PC-3 (cell line): ENCODE measurements at regions of chr7 and their contacts with region 1.

Region 1: GRCh38 chr7:85160223-85160622 is 26.6 kb downstream of the SEMA3D start:
- DNase-seq: peak; percentile 82
- ATAC-seq: peak; percentile 87
- H3K4me3 ChIP-seq: peak overlapping the region; percentile 64
- H3K27ac ChIP-seq: peak overlapping the region; percentile 91
- H3K4me1 ChIP-seq: peaks cover 34% of the 10 kb centered on the region
- H3K27me3 ChIP-seq: no peaks in the 10 kb centered on the region
- CTCF ChIP-seq: no peak

Region 2: DNA sequence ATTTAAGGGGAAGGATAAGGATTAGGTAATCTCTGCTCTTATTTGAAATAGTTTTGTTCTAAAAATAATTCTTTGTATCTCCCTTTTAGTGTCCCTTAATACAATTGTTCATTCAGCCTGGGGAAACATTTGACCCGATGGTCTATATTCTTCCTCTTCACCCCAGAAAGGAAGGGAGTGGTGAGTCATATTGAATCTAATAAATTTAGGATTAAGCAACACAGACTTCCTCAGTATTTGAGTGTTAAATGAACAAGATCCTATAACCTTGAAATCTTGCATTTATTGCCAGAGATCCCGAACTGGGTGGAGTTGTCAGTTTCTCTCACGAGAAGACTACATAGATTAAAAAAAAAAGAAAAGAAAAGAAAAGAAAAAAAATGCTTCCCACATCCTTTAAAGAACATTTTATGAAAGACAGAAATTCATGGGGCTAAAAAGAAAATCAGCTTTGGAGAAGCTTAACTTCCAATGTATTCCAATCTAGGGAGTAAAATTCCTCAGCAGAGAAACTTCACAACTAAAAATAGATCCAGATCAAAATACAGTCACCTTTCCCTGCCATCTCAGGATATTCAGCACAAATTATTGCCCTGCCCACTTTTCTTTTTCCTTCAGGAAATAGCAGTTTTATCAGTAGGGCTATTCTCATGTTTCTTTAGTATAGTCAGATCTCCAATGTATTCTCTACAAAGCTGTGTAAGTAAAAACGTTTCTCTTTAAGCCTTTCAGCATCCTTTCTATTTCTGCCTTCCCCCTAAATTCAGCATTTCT is 55.6 kb before region 1 on chr7:
- CTCF ChIA-PET with region 1: no interaction called
- POLR2A ChIA-PET with region 1: no interaction called
- intact Hi-C with region 1: loop called (anchors 2 kb)
- DNase-seq: peak; percentile 80
- ATAC-seq: peak; percentile 64
- H3K4me3 ChIP-seq: peak overlapping the region; percentile 42
- H3K27ac ChIP-seq: peak overlapping the region; percentile 81
- H3K4me1 ChIP-seq: peaks cover 40% of the 10 kb centered on the region
- H3K27me3 ChIP-seq: no peaks in the 10 kb centered on the region
- CTCF ChIP-seq: no peak

Region 3: DNA sequence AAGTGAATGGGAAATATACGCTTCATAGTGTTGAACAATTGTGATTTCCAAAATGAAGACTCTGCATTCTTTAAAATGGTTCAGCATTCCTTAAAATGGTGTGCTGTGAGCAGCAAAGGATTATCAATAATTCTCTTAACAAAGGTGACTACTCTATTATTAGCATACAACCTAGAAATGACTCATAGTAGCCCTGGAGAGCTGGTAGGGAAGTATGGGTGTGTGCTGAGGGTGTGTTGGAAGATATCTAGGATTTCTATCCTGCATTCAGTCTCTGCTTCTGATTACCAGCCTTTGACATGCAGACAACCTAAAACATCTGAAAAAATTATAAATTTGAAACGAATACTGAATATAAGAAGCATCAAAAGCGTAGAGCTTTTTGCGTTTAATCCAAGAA is 45.9 kb before region 1 on chr7:
- CTCF ChIA-PET with region 1: no interaction called
- POLR2A ChIA-PET with region 1: no interaction called
- intact Hi-C with region 1: loop called (anchors 5 kb)
- DNase-seq: peak; percentile 66
- ATAC-seq: peak; percentile 85
- H3K4me3 ChIP-seq: no peak overlapping the region
- H3K27ac ChIP-seq: peak overlapping the region; percentile 52
- H3K4me1 ChIP-seq: peaks cover 37% of the 10 kb centered on the region
- H3K27me3 ChIP-seq: no peaks in the 10 kb centered on the region
- CTCF ChIP-seq: no peak

Region 4: DNA sequence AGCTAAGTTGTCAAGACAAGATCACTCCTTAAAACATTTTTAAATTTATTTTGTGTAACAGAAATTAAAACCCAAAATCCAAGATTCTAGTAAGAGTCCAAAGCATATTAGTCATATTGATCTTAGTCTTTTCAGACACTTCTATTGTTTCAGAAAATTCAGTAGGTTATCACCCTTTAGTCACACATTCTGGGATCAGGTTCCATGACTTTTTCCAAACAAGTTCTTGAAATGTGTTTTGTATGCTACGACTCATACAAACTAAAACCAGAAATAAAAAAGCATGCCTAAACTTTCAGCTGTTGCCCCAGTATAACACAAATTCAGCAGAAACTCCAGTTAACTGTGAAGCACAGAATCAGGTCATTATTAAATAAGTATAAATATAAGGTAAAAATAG is 16.0 kb after region 1 on chr7:
- CTCF ChIA-PET with region 1: no interaction called
- POLR2A ChIA-PET with region 1: no interaction called
- intact Hi-C with region 1: loop called (anchors 2 kb)
- DNase-seq: peak; percentile 59
- ATAC-seq: peak; percentile 69
- H3K4me3 ChIP-seq: no peak overlapping the region
- H3K27ac ChIP-seq: no peak overlapping the region
- H3K4me1 ChIP-seq: peaks cover 5% of the 10 kb centered on the region
- H3K27me3 ChIP-seq: no peaks in the 10 kb centered on the region
- CTCF ChIP-seq: no peak

Region 5: GRCh38 chr7:85719981-85720963 is 560.0 kb after region 1 on chr7:
- CTCF ChIA-PET with region 1: no interaction called
- POLR2A ChIA-PET with region 1: no interaction called
- intact Hi-C with region 1: loop called (anchors 1 kb)
- DNase-seq: peak; percentile 80
- ATAC-seq: peak; percentile 90
- H3K4me3 ChIP-seq: peak overlapping the region; percentile 42; the same call in 1 of the 2 replicates
- H3K27ac ChIP-seq: peak overlapping the region; percentile 91
- H3K4me1 ChIP-seq: peaks cover 23% of the 10 kb centered on the region
- H3K27me3 ChIP-seq: no peaks in the 10 kb centered on the region
- CTCF ChIP-seq: no peak